PC-9 (cell line): ENCODE measurements at regions of chr2 and their contacts with region 1.

Region 1: DNA sequence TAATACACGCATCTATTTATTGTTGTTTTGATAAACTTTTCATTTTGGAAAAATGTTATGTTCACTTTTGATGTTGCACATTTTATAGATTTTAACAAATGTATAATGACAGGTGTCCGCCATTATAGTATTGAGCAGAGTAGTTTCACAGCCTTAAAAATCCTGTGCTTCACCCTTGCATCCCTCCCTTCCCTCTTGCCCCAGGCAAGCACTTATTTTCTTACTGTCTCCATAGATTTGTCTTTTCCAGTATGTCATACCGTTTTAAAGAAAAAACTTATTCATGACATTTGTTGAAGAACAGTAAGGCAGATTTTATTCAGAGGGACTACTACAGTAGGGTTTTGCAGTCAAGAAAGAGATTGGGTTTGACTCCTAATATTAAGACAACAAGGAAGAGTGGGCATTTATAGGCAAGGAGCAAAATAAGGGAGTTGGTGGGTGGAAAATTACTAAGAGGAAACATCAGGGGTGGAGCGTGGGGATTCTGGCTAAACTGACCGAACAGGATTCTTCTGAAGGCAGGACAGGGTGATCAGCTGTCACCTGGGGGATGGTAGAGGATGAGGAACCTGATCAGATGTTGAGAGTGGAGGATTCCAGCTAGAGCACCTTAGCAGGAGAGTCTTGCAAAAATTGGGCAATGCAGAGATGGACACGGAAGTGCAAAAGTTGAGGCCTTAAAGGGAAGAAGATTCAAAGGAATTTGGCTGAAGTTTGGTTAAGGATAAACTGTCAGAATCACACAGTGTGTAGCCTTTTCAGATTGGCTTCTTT is 108.8 kb downstream of the NCK2 start:
- DNase-seq: peak; percentile 72 to 96
- H3K4me3 ChIP-seq: peak overlapping the region; percentile 33; the same call in 1 of the 2 replicates
- H3K27ac ChIP-seq: peak overlapping the region; percentile 73
- H3K4me1 ChIP-seq: peaks cover 50% of the 10 kb centered on the region
- H3K27me3 ChIP-seq: no peaks in the 10 kb centered on the region
- CTCF ChIP-seq: no peak

Region 2: GRCh38 chr2:105769504-105769903 is 84.0 kb before region 1 on chr2:
- CTCF ChIA-PET with region 1: no interaction called
- POLR2A ChIA-PET with region 1: no interaction called
- intact Hi-C with region 1: no loop called
- DNase-seq: no peak
- H3K4me3 ChIP-seq: no peak overlapping the region
- H3K27ac ChIP-seq: no peak overlapping the region
- H3K4me1 ChIP-seq: no peaks in the 10 kb centered on the region
- H3K27me3 ChIP-seq: no peaks in the 10 kb centered on the region
- CTCF ChIP-seq: no peak

Region 3: GRCh38 chr2:105866216-105867185 is 13.0 kb after region 1 on chr2:
- CTCF ChIA-PET with region 1: interaction called, 16 read pairs
- POLR2A ChIA-PET with region 1: interaction called, 4 read pairs
- intact Hi-C with region 1: no loop called
- DNase-seq: no peak
- H3K4me3 ChIP-seq: no peak overlapping the region
- H3K27ac ChIP-seq: no peak overlapping the region
- H3K4me1 ChIP-seq: no peaks in the 10 kb centered on the region
- H3K27me3 ChIP-seq: no peaks in the 10 kb centered on the region
- CTCF ChIP-seq: no peak

Region 4: GRCh38 chr2:105919826-105920225 is 66.3 kb after region 1 on chr2:
- CTCF ChIA-PET with region 1: no interaction called
- POLR2A ChIA-PET with region 1: no interaction called
- intact Hi-C with region 1: loop called (anchors 1 kb)
- DNase-seq: peak; percentile 29 to 42
- H3K4me3 ChIP-seq: no peak overlapping the region
- H3K27ac ChIP-seq: no peak overlapping the region
- H3K4me1 ChIP-seq: peaks cover 13% of the 10 kb centered on the region; the same call in 1 of the 2 replicates
- H3K27me3 ChIP-seq: no peaks in the 10 kb centered on the region
- CTCF ChIP-seq: peak; percentile 70

Region 5: GRCh38 chr2:107687073-107687472 is 1833.5 kb after region 1 on chr2:
- CTCF ChIA-PET with region 1: no interaction called
- POLR2A ChIA-PET with region 1: no interaction called
- intact Hi-C with region 1: no loop called
- DNase-seq: no peak
- H3K4me3 ChIP-seq: no peak overlapping the region
- H3K27ac ChIP-seq: no peak overlapping the region
- H3K4me1 ChIP-seq: no peaks in the 10 kb centered on the region
- H3K27me3 ChIP-seq: peaks cover 45% of the 10 kb centered on the region
- CTCF ChIP-seq: no peak